GM10248 (cell line): ENCODE measurements at regions of chr17 and their contacts with region 1.

Region 1: GRCh38 chr17:72985881-72986720 is 106.4 kb downstream of the SLC39A11 start:
- DNase-seq: peak; percentile 87
- CTCF ChIP-seq: peak; percentile 72

Region 2: GRCh38 chr17:72775237-72775636 is 210.9 kb before region 1 on chr17:
- CTCF ChIA-PET with region 1: no interaction called
- POLR2A ChIA-PET with region 1: interaction called, 10 read pairs
- DNase-seq: no peak
- CTCF ChIP-seq: no peak

Region 3: GRCh38 chr17:72997559-72997958 is 11.5 kb after region 1 on chr17:
- CTCF ChIA-PET with region 1: interaction called, 35 read pairs
- POLR2A ChIA-PET with region 1: no interaction called
- DNase-seq: no peak
- CTCF ChIP-seq: no peak

Region 4: DNA sequence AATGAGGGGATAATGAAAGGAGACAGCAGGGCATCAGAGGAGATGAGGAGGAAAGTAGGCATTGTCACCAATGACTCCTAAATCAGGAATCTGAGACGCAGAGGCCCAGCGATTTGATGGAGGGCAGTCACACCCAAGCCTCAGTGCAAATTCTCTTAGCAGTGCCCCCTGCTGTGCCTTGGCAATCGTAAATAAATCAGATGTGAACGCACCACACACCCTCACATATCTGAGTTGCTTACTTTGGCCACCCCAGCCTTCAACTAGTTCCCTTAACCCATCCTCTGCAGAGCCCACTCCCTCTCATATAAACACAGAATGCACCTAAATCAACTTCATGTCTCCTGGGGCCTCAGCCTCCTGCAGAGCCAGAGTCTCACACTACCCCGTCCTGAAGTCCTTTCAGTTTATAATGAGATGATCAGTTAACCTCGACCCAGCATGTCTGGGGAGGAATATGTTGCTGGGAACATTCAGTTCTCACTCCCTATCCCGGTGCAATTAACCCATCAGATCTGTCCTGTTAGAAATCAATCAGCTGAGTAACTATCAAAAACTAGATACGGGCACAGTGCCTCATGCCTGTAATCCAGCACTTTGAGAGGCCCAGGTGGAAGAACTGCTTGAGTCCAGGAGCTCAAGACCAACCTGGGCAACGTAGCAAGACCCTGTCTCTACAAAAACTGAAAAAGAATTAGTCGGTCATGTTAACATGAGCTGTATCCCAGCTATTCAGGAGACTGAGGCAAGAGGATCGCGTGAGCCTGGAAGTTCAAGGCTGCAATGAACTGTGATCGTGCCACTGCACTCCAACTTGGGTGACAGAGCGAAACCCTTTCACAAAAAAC is 27.9 kb after region 1 on chr17:
- CTCF ChIA-PET with region 1: interaction called, 16 read pairs
- POLR2A ChIA-PET with region 1: no interaction called
- DNase-seq: no peak
- CTCF ChIP-seq: no peak

Region 5: GRCh38 chr17:73156166-73156840 is 170.2 kb after region 1 on chr17:
- CTCF ChIA-PET with region 1: interaction called, 38 read pairs
- POLR2A ChIA-PET with region 1: interaction called, 3 read pairs
- DNase-seq: peak; percentile 81
- CTCF ChIP-seq: peak; percentile 83

Region 6: GRCh38 chr17:73192894-73193701 is 207.0 kb after region 1 on chr17 and contains the start of gene COG1:
- CTCF ChIA-PET with region 1: interaction called, 22 read pairs
- POLR2A ChIA-PET with region 1: no interaction called
- DNase-seq: peak; percentile 96
- CTCF ChIP-seq: no peak